Heart right ventricle (tissue), 16 donors: ENCODE measurements at regions of chr16 and their contacts with region 1.

Region 1: DNA sequence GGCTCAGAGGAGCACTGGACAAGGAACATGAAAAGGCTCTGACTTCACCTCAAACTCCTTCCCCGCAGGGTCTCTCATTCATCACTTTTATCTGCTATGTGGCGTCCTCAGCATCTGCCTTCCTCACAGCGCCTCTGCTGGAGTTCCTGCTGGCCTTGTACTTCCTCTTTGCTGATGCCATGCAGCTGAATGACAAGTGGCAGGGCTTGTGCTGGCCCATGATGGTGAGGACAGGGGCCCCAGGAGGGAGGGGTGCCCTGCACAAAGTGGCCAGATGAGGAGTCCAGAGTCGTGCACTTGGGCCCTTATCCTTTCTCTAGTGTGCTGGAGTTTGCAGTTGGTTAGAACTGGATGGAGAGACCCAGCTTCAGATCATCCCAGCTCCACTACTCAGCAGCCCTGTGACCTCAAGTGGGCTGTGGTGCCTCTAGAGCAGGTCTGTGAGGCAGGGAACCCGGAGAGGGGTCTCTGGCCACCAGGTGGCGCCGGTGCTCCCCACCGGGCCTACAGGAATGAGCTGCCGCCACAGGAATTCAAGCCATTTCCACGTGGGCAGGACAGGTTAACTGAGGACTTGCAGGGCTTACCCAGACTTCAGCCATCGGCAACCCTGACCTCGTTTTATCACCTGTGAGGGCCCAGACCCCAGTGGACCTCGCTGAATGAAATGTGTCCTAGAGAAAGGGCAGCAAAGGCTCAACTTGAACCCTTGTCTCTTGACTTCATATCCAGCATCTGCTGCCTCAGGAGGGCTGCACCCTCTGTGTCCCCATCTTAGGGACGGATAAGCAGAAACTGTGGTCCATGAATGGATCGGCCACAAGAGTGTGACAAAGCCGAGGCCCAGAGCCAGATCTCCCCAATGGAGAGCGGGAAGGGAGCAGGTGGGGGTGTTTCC is 4.0 kb downstream of the CMTM3 start:
- DNase-seq: peak; percentile 87 to 88
- ATAC-seq: peak; percentile 21 to 71 (median 68)
- H3K4me3 ChIP-seq: no peak overlapping the region
- H3K27ac ChIP-seq: peak overlapping the region in 2 of 10 donors; percentile 24 to 26
- H3K4me1 ChIP-seq: peaks cover 0 to 52% (median 30%) of the 10 kb centered on the region in 9 donors
- H3K27me3 ChIP-seq: no peaks in the 10 kb centered on the region
- CTCF ChIP-seq: peak; percentile 86 to 96 (median 93)

Region 2: GRCh38 chr16:66406534-66407221 is 201.8 kb before region 1 on chr16:
- intact Hi-C with region 1: loop called in 8 of 10 experiments (anchors 2 to 10 kb)
- DNase-seq: peak; percentile 88 to 91
- ATAC-seq: peak; percentile 77 to 94 (median 88)
- H3K4me3 ChIP-seq: peak overlapping the region; percentile 37 to 81 (median 60)
- H3K27ac ChIP-seq: peak overlapping the region in 9 of 10 donors; percentile 28 to 81 (median 65)
- H3K4me1 ChIP-seq: peaks cover 6 to 38% (median 34%) of the 10 kb centered on the region in 9 donors
- H3K27me3 ChIP-seq: no peaks in the 10 kb centered on the region
- CTCF ChIP-seq: peak; percentile 85 to 96 (median 93)

Region 3: GRCh38 chr16:66516808-66517585 is 91.5 kb before region 1 on chr16:
- intact Hi-C with region 1: loop called in 2 of 10 experiments (anchors 5 to 10 kb)
- DNase-seq: peak; percentile 96 to 99
- ATAC-seq: peak; percentile 89 to 97 (median 95)
- H3K4me3 ChIP-seq: peak overlapping the region in 8 of 10 donors; percentile 12 to 47 (median 31)
- H3K27ac ChIP-seq: peak overlapping the region; percentile 93 to 100 (median 98)
- H3K4me1 ChIP-seq: peaks cover 19 to 91% (median 76%) of the 10 kb centered on the region in 9 donors
- H3K27me3 ChIP-seq: no peaks in the 10 kb centered on the region
- CTCF ChIP-seq: no peak

Region 4: GRCh38 chr16:66660422-66661209 is 52.1 kb after region 1 on chr16:
- intact Hi-C with region 1: loop called in 1 of 10 experiments (anchors 5 kb)
- DNase-seq: peak; percentile 57 to 64
- ATAC-seq: peak; percentile 93 to 97 (median 96)
- H3K4me3 ChIP-seq: no peak overlapping the region
- H3K27ac ChIP-seq: peak overlapping the region; percentile 1 to 79 (median 54)
- H3K4me1 ChIP-seq: peaks cover 8 to 39% (median 29%) of the 10 kb centered on the region in 9 donors
- H3K27me3 ChIP-seq: no peaks in the 10 kb centered on the region
- CTCF ChIP-seq: peak in 5 of 9 donors; percentile 12 to 49 (median 41)

Region 5: GRCh38 chr16:66740010-66740409 is 131.5 kb after region 1 on chr16:
- intact Hi-C with region 1: loop called in 1 of 10 experiments (anchors 5 kb)
- DNase-seq: no peak
- ATAC-seq: peak in 2 of 8 donors; percentile 13 to 21
- H3K4me3 ChIP-seq: peak overlapping the region in 1 of 10 donors; percentile 7
- H3K27ac ChIP-seq: peak overlapping the region; percentile 70 to 93 (median 83)
- H3K4me1 ChIP-seq: peaks cover 27 to 67% (median 44%) of the 10 kb centered on the region in 9 donors
- H3K27me3 ChIP-seq: no peaks in the 10 kb centered on the region
- CTCF ChIP-seq: peak; percentile 15 to 71 (median 58)

Region 6: DNA sequence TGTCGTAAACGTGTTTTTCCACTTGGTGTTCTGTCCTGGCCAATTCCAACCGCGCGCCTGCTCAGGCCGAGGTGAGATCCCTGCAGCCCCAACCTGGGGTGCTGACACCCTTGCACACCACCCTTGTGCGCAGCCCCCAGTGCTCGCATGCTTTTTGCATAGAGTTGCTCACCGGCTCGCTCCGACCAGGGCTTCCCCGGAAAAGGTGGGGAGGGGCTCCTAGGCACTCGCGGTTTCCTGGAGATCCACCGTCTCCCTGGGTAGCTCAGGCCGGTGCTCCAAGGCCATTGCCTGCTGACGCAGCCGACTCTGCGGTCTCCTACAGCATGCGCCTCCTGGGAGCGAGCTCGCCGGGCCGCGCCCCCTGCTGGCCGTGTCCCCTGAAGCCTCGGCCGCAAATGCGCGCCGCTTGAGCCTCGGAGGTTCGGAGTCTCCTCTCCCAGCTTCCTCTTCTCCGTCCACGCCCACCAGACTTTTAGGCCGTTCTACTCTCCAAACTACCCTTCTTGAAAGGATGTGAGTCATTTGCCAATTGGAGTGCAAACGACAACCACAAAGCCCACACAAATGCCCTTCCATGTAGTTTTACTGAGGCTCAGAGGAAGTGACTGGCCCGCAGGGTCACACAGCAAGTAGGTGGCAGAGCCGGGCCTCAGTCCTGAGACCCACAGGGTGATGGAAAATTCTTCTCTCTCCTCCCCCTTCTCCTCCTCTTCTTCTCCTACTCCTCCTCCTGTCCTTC is 264.6 kb after region 1 on chr16:
- intact Hi-C with region 1: loop called (anchors 2 to 10 kb)
- DNase-seq: peak; percentile 89 to 92
- ATAC-seq: peak; percentile 92 to 97 (median 96)
- H3K4me3 ChIP-seq: peak overlapping the region in 9 of 10 donors; percentile 8 to 52 (median 43)
- H3K27ac ChIP-seq: peak overlapping the region in 6 of 10 donors; percentile 1 to 70 (median 32)
- H3K4me1 ChIP-seq: peaks cover 0 to 23% (median 9%) of the 10 kb centered on the region in 9 donors
- H3K27me3 ChIP-seq: peaks cover 0 to 5% (median 0%) of the 10 kb centered on the region in 7 donors
- CTCF ChIP-seq: peak; percentile 75 to 99 (median 96)